ENCODE measurements at regions of chr7 and their contacts with region 1.

Region 1: GRCh38 chr7:116786791-116787443 is 75.5 kb upstream of the CAPZA2 start:
- DNase-seq: peak; percentile 40
- H3K4me3 Mint-ChIP-seq: no peak overlapping the region
- H3K27ac Mint-ChIP-seq: no peak overlapping the region
- H3K4me1 Mint-ChIP-seq: no peaks in the 10 kb centered on the region
- H3K27me3 Mint-ChIP-seq: no peaks in the 10 kb centered on the region

Region 2: DNA sequence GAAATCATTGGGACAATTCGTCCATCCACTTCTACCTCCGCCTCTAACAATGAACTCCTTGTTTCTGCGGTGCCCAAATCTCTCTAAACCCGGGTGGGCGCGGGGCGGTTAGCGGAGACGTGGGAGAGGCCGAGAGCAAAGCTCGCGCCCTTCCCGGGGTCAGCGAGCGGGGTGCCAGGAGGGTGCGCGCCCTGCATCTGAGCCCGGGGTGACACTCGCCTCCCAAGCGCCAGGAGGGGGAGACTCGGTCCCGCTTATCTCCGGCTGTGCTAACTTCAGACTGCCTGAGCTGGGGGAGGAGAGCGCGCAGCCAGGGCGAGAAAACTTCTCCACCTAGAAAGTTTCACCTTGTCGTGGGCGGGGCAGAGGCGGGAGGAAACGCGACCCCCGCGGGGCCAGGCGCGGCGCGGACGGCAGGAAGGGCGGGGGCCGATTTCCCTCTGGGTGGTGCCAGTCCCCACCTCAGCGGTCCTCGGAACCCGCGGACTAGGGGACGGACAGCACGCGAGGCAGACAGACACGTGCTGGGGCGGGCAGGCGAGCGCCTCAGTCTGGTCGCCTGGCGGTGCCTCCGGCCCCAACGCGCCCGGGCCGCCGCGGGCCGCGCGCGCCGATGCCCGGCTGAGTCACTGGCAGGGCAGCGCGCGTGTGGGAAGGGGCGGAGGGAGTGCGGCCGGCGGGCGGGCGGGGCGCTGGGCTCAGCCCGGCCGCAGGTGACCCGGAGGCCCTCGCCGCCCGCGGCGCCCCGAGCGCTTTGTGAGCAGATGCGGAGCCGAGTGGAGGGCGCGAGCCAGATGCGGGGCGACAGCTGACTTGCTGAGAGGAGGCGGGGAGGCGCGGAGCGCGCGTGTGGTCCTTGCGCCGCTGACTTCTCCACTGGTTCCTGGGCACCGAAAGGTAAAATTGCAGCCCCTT is 115.0 kb before region 1 on chr7 and contains the start of gene MET:
- CTCF ChIA-PET with region 1: no interaction called
- POLR2A ChIA-PET with region 1: no interaction called
- intact Hi-C with region 1: loop called (anchors 1 kb)
- DNase-seq: peak; percentile 73
- H3K4me3 Mint-ChIP-seq: peak within 1 kb of the TSS; percentile 66
- H3K27ac Mint-ChIP-seq: no peak within 1 kb of the TSS
- H3K4me1 Mint-ChIP-seq: peaks cover 8% of the 10 kb centered on the region
- H3K27me3 Mint-ChIP-seq: peaks cover 61% of the 10 kb centered on the region
- total RNA-seq, gene MET: 1.4 to 1.8 TPM

Region 3: DNA sequence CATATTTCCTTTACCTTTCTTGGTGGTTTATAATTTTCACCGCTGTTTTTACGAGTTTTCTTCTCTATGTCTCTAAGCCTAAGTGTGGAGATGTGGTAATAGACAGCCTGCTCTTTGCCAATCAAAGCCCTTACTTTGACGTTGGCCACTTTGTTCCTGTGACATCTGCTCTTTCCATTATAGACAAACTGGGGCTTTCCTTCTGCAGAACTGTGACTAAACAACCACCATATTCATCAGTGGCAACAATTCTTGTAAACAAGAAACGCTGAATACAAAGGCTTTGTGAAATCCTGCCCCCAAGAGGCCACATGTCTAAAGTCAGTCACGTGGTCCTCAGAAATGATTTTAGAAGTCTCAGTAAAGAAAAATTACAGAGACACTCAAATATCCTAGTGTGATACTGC is 15.8 kb after region 1 on chr7:
- CTCF ChIA-PET with region 1: interaction called, 4 read pairs
- POLR2A ChIA-PET with region 1: no interaction called
- intact Hi-C with region 1: loop called (anchors 1 kb)
- DNase-seq: peak; percentile 56
- H3K4me3 Mint-ChIP-seq: no peak overlapping the region
- H3K27ac Mint-ChIP-seq: no peak overlapping the region
- H3K4me1 Mint-ChIP-seq: peaks cover 16% of the 10 kb centered on the region
- H3K27me3 Mint-ChIP-seq: peaks cover 19% of the 10 kb centered on the region

Region 4: GRCh38 chr7:116876664-116877442 is 89.9 kb after region 1 on chr7:
- CTCF ChIA-PET with region 1: no interaction called
- POLR2A ChIA-PET with region 1: no interaction called
- intact Hi-C with region 1: no loop called
- DNase-seq: no peak
- H3K4me3 Mint-ChIP-seq: no peak overlapping the region
- H3K27ac Mint-ChIP-seq: no peak overlapping the region
- H3K4me1 Mint-ChIP-seq: peaks cover 39% of the 10 kb centered on the region
- H3K27me3 Mint-ChIP-seq: no peaks in the 10 kb centered on the region

Measured in activated CD4-positive, alpha-beta memory T cell treated with anti-CD3 and anti-CD28 coated beads for 36 hours (primary cell).